GM10248 (cell line): ENCODE measurements at regions of chr1 and their contacts with region 1.

Region 1: DNA sequence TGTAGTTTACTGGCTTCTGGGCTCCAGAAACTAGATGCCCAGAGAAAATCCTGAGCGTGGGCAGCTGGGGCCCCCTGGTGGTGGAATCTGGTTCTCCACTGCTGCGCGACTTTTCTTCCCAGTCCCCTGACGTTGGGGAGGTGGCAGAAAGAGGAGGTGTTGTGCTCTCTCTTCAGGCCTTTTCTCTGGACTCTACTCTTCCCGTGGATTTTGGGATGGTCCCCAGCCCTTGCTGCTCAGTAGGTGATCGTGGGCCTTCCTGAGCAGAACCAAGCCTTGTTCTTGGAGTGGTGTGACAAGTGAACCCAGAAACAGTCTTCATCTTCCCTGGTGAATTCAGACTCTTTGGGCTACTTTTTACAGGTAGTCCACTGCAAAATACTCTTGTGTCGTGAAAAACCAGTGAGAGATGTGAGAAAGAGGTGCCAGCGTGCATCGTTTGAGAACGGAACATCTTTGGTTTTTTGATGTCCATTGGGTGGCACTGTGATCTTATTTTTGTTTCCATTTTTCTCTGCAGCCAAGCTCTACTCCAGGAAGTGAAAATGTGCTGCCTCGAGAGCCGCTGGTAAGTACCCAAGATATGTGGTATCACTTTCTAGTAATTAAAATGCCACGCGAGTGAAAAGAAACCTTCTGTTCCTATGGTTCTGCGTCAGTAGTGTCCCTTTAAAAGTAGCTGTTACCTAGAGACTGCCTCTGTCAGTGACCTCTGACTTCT is 20.2 kb downstream of the PEX14 start:
- DNase-seq: peak; percentile 83
- CTCF ChIP-seq: peak; percentile 90

Region 2: GRCh38 chr1:10360045-10360444 is 134.9 kb before region 1 on chr1:
- CTCF ChIA-PET with region 1: no interaction called
- POLR2A ChIA-PET with region 1: no interaction called
- DNase-seq: no peak
- CTCF ChIP-seq: no peak

Region 3: DNA sequence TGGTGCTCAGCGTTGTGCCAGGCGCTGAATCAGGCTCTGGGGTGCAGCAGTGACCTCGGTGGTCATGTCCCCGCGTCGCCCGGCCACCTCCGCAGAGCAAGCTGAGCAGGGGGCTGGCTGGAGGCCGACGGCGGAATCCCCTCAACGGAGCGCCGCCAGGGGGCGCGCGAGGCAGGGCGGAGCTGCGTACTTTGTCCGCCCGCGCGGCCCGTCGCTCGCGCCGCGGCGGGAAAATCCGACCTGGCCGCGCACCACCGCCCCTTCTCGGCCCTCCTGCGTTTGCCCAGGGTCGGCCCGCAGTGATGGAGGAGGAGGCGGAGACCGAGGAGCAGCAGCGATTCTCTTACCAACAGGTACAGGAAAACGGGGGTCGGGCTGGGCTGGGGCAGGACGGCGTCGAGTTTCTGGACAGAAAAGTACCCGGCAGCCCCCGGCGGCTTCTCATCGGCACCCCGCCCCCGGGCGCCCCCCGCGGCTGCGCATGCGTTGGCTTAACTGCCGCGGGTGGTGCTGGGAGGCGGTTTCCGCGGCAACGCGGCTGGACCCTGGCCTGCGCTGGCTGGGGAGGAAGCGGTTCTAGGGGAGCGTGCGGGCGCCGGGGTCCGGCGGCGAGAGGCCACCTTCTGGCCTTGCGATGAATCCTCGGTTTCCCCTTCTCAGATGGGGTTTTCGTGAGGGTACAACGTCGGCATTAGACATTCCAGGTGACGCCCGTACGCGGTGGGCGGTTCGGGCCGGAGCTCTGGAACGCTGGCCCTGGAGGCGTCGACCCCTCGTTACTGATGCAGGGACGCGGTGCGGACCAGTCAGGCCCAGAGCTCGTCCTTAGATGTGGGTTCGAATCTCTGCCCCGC is 64.5 kb before region 1 on chr1 and contains the start of gene CENPS:
- CTCF ChIA-PET with region 1: interaction called, 147 read pairs
- POLR2A ChIA-PET with region 1: interaction called, 4 read pairs
- DNase-seq: peak; percentile 99
- CTCF ChIP-seq: peak; percentile 88

Region 4: GRCh38 chr1:10479296-10479695 is 15.6 kb before region 1 on chr1:
- CTCF ChIA-PET with region 1: interaction called, 54 read pairs
- POLR2A ChIA-PET with region 1: no interaction called
- DNase-seq: no peak
- CTCF ChIP-seq: no peak

Region 5: DNA sequence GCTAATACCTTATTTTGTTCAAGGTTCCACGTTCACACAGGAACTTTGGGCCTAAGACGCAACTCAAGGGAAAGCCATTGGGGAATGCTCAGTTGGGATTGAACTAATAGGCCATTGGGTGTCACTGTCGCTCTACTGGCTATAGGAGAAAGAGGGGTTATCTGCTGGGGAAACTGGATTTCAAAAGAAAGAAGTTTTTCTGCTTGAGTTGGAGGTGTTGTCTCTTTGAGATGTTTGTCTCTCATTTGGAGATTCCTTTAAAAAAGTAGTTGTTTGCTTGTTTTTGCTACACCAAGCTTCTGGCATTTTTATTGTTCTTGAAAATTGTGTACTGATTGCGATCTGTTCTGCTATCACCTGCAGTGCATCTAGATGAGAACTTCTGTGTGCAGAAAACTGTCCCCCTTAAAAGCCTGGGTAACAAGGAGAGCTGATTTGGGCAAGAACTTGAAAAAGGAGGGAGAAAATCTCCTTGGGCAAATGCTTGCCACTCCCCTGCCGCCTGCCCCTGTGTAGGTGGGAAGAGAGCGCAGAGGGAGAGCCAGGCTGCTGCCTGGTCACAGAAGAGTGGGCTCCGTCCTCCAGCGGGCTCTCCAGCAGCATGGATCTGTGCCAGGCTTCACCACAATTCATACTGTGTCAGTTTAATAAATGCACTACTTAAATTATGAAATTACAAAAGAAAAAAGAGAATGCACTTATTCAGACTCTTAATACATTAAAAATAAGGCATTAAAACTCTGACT is 19.7 kb after region 1 on chr1:
- CTCF ChIA-PET with region 1: interaction called, 105 read pairs
- POLR2A ChIA-PET with region 1: no interaction called
- DNase-seq: no peak
- CTCF ChIP-seq: peak; percentile 35

Region 6: GRCh38 chr1:10561955-10562354 is 67.0 kb after region 1 on chr1:
- CTCF ChIA-PET with region 1: no interaction called
- POLR2A ChIA-PET with region 1: no interaction called
- DNase-seq: no peak
- CTCF ChIP-seq: no peak

Region 7: DNA sequence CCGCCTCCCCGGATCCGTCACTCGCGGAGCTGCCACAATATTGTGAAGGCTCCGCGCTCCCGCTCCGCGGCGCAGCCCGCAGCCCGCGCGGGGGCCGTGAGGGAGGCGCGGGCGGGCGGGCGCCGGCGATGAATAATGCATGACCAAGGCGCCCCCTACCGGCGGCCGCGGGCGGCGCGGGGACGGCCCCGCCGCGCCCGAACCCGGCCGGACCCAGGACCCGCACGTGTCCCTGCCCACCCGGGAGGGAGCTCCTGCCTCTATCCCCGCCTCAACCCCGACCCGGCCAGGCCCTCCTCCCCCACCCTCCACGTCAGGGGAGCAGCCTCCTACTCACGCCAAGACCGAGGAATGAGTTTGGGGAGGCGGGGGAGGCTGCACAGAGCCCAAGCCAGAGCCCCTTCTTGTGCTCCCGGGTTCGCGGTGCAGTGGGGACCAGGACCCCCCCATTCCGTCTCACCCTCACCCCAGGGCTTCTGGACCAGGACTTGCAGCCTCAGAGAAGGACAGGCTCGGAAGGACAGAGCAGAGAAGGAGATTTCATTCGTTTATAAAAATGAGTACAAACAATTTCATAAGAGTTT is 372.3 kb after region 1 on chr1:
- CTCF ChIA-PET with region 1: interaction called, 11 read pairs
- POLR2A ChIA-PET with region 1: no interaction called
- DNase-seq: peak; percentile 82
- CTCF ChIP-seq: peak; percentile 64